CD8-positive, alpha-beta T cell (primary cell): ENCODE measurements at regions of chr19 and their contacts with region 1.

Region 1: GRCh38 chr19:38869856-38870607 is 8.0 kb downstream of the RINL start:
- DNase-seq: peak; percentile 89 to 98 (median 94)
- ATAC-seq: peak; percentile 88
- H3K4me3 ChIP-seq: peak overlapping the region; percentile 75 to 79
- H3K4me3 Mint-ChIP-seq: peak overlapping the region; percentile 84
- H3K27ac ChIP-seq: peak overlapping the region; percentile 50 to 79
- H3K27ac Mint-ChIP-seq: peak overlapping the region; percentile 89
- H3K4me1 ChIP-seq: peaks cover 46% of the 10 kb centered on the region
- H3K4me1 Mint-ChIP-seq: peaks cover 50% of the 10 kb centered on the region
- H3K27me3 ChIP-seq: no peaks in the 10 kb centered on the region
- H3K27me3 Mint-ChIP-seq: no peaks in the 10 kb centered on the region
- CTCF ChIP-seq: peak; percentile 84

Region 2: GRCh38 chr19:38729653-38730469 is 140.2 kb before region 1 on chr19:
- CTCF ChIA-PET with region 1: interaction called, 5 read pairs
- POLR2A ChIA-PET with region 1: no interaction called
- intact Hi-C with region 1: loop called in 1 of 2 experiments (anchors 1 kb)
- DNase-seq: peak; percentile 47 to 86 (median 79)
- ATAC-seq: peak; percentile 62
- H3K4me3 ChIP-seq: no peak overlapping the region
- H3K4me3 Mint-ChIP-seq: no peak overlapping the region
- H3K27ac ChIP-seq: no peak overlapping the region
- H3K27ac Mint-ChIP-seq: no peak overlapping the region
- H3K4me1 ChIP-seq: peaks cover 17% of the 10 kb centered on the region
- H3K4me1 Mint-ChIP-seq: peaks cover 32% of the 10 kb centered on the region
- H3K27me3 ChIP-seq: no peaks in the 10 kb centered on the region
- H3K27me3 Mint-ChIP-seq: no peaks in the 10 kb centered on the region
- CTCF ChIP-seq: peak; percentile 75

Region 3: GRCh38 chr19:38769635-38770211 is 100.3 kb before region 1 on chr19:
- CTCF ChIA-PET with region 1: interaction called, 8 read pairs
- POLR2A ChIA-PET with region 1: interaction called, 3 read pairs
- intact Hi-C with region 1: loop called (anchors 2 to 5 kb)
- DNase-seq: peak; percentile 80 to 98 (median 93)
- ATAC-seq: peak; percentile 85
- H3K4me3 ChIP-seq: peak overlapping the region; percentile 38 to 41
- H3K4me3 Mint-ChIP-seq: peak overlapping the region; percentile 68
- H3K27ac ChIP-seq: peak overlapping the region in 1 of 2 experiments; percentile 77
- H3K27ac Mint-ChIP-seq: peak overlapping the region; percentile 60
- H3K4me1 ChIP-seq: peaks cover 5% of the 10 kb centered on the region
- H3K4me1 Mint-ChIP-seq: peaks cover 5% of the 10 kb centered on the region
- H3K27me3 ChIP-seq: no peaks in the 10 kb centered on the region
- H3K27me3 Mint-ChIP-seq: no peaks in the 10 kb centered on the region
- CTCF ChIP-seq: peak; percentile 65

Region 4: DNA sequence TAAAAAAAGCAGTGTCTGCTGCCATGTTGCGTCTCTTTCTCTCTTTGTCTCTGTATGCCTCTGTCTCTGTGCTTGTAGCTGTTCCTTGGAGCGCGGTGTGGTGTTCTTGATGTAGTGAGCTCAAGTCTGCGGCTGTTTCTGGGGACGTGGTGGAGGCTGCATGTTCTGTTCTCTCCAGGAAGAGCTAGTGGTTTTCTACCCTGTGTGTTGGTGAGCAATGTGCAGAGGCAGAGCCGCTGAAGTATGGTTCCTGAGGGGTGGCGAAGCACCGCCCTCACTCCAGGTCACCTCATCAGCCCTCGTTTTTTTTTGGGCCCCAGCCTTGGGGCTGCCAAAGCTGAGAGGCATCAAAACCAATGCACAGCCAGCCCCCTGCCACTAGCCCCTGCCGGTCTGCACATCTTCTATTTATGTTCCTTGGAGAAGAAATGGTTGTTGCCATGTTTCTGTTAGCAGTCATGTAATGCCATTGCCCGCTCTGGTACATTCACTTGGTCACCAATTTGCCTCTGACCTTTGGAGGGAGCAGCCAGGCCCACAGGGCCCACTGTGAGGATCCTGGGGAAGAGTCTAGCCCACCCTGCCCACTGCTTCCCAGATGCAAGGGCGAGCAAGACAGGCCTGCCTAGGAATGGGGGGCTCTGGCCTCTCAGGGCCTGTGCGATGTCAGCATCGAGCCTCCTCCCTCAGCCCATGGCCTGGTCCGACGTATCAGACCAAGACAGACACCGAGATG is 27.4 kb before region 1 on chr19:
- CTCF ChIA-PET with region 1: interaction called, 6 read pairs
- POLR2A ChIA-PET with region 1: interaction called, 14 read pairs
- intact Hi-C with region 1: no loop called
- DNase-seq: peak; percentile 38 to 88 (median 72)
- ATAC-seq: peak; percentile 79
- H3K4me3 ChIP-seq: peak overlapping the region in 1 of 2 experiments; percentile 34
- H3K4me3 Mint-ChIP-seq: peak overlapping the region; percentile 72
- H3K27ac ChIP-seq: peak overlapping the region; percentile 46 to 56
- H3K27ac Mint-ChIP-seq: peak overlapping the region; percentile 89
- H3K4me1 ChIP-seq: peaks cover 80% of the 10 kb centered on the region
- H3K4me1 Mint-ChIP-seq: peaks cover 76% of the 10 kb centered on the region
- H3K27me3 ChIP-seq: no peaks in the 10 kb centered on the region
- H3K27me3 Mint-ChIP-seq: no peaks in the 10 kb centered on the region
- CTCF ChIP-seq: no peak

Region 5: GRCh38 chr19:38899447-38900219 is 29.6 kb after region 1 on chr19 and contains the starts of genes NFKBIB and SIRT2:
- CTCF ChIA-PET with region 1: interaction called, 4 read pairs
- POLR2A ChIA-PET with region 1: no interaction called
- intact Hi-C with region 1: loop called in 1 of 2 experiments (anchors 2 kb)
- DNase-seq: peak; percentile 97 to 100 (median 99)
- ATAC-seq: peak; percentile 85
- H3K4me3 ChIP-seq: peak within 1 kb of the TSS; percentile 68 to 88
- H3K4me3 Mint-ChIP-seq: peak within 1 kb of the TSS; percentile 93
- H3K27ac ChIP-seq: peak within 1 kb of the TSS; percentile 93 to 100
- H3K27ac Mint-ChIP-seq: peak within 1 kb of the TSS; percentile 98
- H3K4me1 ChIP-seq: peaks cover 23% of the 10 kb centered on the region
- H3K4me1 Mint-ChIP-seq: peaks cover 57% of the 10 kb centered on the region
- H3K27me3 ChIP-seq: no peaks in the 10 kb centered on the region
- H3K27me3 Mint-ChIP-seq: no peaks in the 10 kb centered on the region
- CTCF ChIP-seq: no peak
- total RNA-seq, gene NFKBIB: 62.9 to 66.1 TPM
- total RNA-seq, gene SIRT2: 90.6 to 95.1 TPM

Region 6: DNA sequence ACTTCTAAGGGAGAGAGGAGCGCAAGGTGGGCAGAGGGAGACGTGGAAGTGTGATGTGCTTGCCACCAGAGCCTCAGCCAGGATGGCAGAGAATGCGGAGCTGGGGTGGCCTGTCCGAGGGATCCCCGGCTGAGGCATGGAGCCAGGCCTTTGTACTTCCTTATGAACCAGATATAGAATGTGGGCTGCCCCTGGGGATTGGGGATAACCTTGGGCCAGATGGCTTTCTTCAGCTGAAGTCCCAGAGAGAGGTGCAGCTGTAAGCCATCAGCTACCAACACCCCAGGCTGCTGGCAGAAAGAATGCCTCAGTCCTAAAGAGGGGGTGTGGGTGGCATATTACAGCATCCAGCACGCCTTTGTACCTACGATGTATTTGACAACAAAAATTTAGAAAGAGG is 131.0 kb after region 1 on chr19:
- CTCF ChIA-PET with region 1: no interaction called
- POLR2A ChIA-PET with region 1: no interaction called
- intact Hi-C with region 1: no loop called
- DNase-seq: no peak
- ATAC-seq: no peak
- H3K4me3 ChIP-seq: no peak overlapping the region
- H3K4me3 Mint-ChIP-seq: no peak overlapping the region
- H3K27ac ChIP-seq: no peak overlapping the region
- H3K27ac Mint-ChIP-seq: no peak overlapping the region
- H3K4me1 ChIP-seq: no peaks in the 10 kb centered on the region
- H3K4me1 Mint-ChIP-seq: no peaks in the 10 kb centered on the region
- H3K27me3 ChIP-seq: no peaks in the 10 kb centered on the region
- H3K27me3 Mint-ChIP-seq: peaks cover 18% of the 10 kb centered on the region
- CTCF ChIP-seq: no peak